ENCODE measurements at regions of chr13 and their contacts with region 1.

Region 1: GRCh38 chr13:108915634-108916512 is 286.5 kb downstream of the MYO16 start:
- DNase-seq: peak; percentile 86
- ATAC-seq: peak; percentile 60
- H3K4me3 ChIP-seq: peak overlapping the region; percentile 53
- H3K27ac ChIP-seq: peak overlapping the region; percentile 73
- H3K4me1 ChIP-seq: peaks cover 51% of the 10 kb centered on the region
- H3K27me3 ChIP-seq: no peaks in the 10 kb centered on the region
- CTCF ChIP-seq: no peak

Region 2: DNA sequence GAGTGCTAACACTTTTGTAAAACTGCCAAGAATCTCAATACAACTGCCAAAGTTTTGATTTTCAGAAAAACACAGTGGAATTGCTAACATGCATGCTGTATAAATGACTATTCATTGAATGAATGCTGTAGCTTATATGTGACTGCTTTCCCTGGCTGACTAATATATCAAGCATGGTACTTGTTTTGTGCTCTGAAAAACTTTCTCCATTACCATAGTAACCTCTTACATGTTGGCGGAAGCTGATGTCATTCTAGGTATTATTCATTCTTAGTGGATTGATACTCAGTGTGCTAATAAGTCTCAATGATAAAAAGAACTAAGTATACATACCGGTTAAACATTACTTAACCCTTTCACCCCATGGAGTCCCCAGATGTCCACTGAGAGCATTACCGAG is 452.5 kb before region 1 on chr13:
- CTCF ChIA-PET with region 1: no interaction called
- POLR2A ChIA-PET with region 1: no interaction called
- intact Hi-C with region 1: no loop called
- DNase-seq: peak; percentile 61
- ATAC-seq: no peak
- H3K4me3 ChIP-seq: no peak overlapping the region
- H3K27ac ChIP-seq: no peak overlapping the region
- H3K4me1 ChIP-seq: no peaks in the 10 kb centered on the region
- H3K27me3 ChIP-seq: no peaks in the 10 kb centered on the region
- CTCF ChIP-seq: no peak

Region 3: GRCh38 chr13:108807841-108808240 is 108.0 kb before region 1 on chr13:
- CTCF ChIA-PET with region 1: no interaction called
- POLR2A ChIA-PET with region 1: no interaction called
- intact Hi-C with region 1: no loop called
- DNase-seq: no peak
- ATAC-seq: no peak
- H3K4me3 ChIP-seq: no peak overlapping the region
- H3K27ac ChIP-seq: no peak overlapping the region
- H3K4me1 ChIP-seq: no peaks in the 10 kb centered on the region
- H3K27me3 ChIP-seq: no peaks in the 10 kb centered on the region
- CTCF ChIP-seq: no peak

Region 4: DNA sequence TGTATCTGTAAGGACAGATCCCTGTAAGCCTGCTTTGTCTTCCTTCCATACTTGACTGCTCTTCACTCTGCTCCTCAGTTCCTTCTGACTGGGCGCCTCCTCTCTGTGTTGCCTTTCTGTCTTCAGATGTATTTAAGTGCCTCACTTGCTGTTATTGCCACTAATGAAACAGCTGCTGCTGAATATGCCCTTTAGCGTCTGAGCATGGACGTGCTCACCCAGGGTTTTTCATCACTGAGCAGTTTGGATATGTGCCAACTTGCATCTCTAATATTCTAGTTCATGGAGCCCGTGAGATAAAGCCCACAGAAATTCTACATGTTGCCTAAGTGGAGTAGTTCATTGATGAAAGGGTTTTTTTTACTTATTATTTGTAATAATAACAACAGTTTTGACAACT is 88.2 kb before region 1 on chr13:
- CTCF ChIA-PET with region 1: no interaction called
- POLR2A ChIA-PET with region 1: no interaction called
- intact Hi-C with region 1: no loop called
- DNase-seq: no peak
- ATAC-seq: no peak
- H3K4me3 ChIP-seq: no peak overlapping the region
- H3K27ac ChIP-seq: no peak overlapping the region
- H3K4me1 ChIP-seq: no peaks in the 10 kb centered on the region
- H3K27me3 ChIP-seq: no peaks in the 10 kb centered on the region
- CTCF ChIP-seq: no peak

Region 5: GRCh38 chr13:108961542-108962125 is 45.8 kb after region 1 on chr13:
- CTCF ChIA-PET with region 1: interaction called, 4 read pairs
- POLR2A ChIA-PET with region 1: no interaction called
- intact Hi-C with region 1: loop called (anchors 2 kb)
- DNase-seq: peak; percentile 67
- ATAC-seq: peak; percentile 48
- H3K4me3 ChIP-seq: no peak overlapping the region
- H3K27ac ChIP-seq: no peak overlapping the region
- H3K4me1 ChIP-seq: 0 out of 2 replicates have a peak, but pooled peaks cover 6% of the 10 kb centered on the region
- H3K27me3 ChIP-seq: no peaks in the 10 kb centered on the region
- CTCF ChIP-seq: peak; percentile 83

Region 6: GRCh38 chr13:110116072-110116487 is 1200.2 kb after region 1 on chr13:
- CTCF ChIA-PET with region 1: no interaction called
- POLR2A ChIA-PET with region 1: no interaction called
- intact Hi-C with region 1: loop called (anchors 5 kb)
- DNase-seq: peak; percentile 76
- ATAC-seq: peak; percentile 50; the same call in 1 of the 2 replicates
- H3K4me3 ChIP-seq: no peak overlapping the region
- H3K27ac ChIP-seq: no peak overlapping the region
- H3K4me1 ChIP-seq: peaks cover 38% of the 10 kb centered on the region
- H3K27me3 ChIP-seq: no peaks in the 10 kb centered on the region
- CTCF ChIP-seq: peak; percentile 85